ENCODE measurements at regions of chr9 and their contacts with region 1.

Region 1: DNA sequence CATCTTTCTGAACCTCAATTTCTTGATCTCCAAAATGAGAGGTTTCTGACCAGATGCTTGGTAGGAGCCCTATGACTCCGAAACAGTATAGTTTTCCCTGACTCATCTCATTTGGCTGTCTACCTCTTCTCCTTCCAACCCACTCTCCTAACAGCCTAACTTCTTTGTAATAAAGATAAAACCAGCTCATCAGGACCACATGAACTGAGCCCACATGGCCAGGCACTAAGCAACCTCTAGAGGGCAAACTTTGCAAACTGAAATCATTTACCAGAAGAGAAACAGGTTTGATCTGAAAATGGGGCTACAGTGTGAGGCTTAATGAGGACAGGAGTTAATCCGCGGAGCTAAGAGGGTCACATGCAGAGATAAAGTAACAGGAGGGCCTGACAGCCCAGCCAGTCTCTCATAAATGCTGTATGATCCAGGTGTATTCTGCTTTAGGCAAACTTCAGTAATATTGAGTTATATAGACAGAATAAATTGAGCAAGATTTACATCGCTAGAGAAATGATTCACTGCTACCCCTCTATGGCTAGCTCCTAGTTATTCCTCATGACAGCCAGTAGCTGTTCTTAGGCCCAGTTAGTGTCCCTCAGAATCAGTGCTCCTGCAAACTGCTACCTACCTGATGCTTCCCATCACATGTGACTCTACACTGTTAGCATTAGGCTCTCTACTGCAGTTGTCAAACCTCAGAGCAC is 64.6 kb downstream of the ABCA1 start:
- DNase-seq: peak; percentile 64

Region 2: DNA sequence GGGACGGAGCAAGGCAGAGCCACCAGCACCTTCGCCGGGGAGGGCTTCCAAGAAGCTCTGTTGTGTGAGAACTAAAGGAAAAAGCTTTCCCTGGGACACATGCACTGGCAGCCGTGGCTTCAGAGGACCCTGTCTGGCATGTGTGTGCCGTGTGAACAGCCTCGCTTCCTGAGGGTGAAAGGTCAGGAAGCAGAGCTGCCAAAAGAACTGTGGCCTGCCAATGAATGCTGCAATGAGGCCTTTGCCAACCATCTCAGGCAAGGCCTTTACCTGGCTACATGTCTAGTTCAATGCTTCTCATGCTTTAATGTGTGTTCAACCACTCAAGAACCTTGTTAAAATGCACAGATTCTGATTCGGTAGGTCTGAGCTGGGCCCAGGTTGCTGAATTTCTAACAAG is 45.9 kb before region 1 on chr9:
- intact Hi-C with region 1: no loop called
- DNase-seq: no peak

Region 3: GRCh38 chr9:105157130-105157583 is 293.8 kb after region 1 on chr9:
- intact Hi-C with region 1: loop called (anchors 10 kb)
- DNase-seq: peak; percentile 84

Measured in posterior vena cava (tissue), 2 donors.